Naive thymus-derived CD4-positive, alpha-beta T cell (primary cell): ENCODE measurements at regions of chr2 and their contacts with region 1.

Region 1: DNA sequence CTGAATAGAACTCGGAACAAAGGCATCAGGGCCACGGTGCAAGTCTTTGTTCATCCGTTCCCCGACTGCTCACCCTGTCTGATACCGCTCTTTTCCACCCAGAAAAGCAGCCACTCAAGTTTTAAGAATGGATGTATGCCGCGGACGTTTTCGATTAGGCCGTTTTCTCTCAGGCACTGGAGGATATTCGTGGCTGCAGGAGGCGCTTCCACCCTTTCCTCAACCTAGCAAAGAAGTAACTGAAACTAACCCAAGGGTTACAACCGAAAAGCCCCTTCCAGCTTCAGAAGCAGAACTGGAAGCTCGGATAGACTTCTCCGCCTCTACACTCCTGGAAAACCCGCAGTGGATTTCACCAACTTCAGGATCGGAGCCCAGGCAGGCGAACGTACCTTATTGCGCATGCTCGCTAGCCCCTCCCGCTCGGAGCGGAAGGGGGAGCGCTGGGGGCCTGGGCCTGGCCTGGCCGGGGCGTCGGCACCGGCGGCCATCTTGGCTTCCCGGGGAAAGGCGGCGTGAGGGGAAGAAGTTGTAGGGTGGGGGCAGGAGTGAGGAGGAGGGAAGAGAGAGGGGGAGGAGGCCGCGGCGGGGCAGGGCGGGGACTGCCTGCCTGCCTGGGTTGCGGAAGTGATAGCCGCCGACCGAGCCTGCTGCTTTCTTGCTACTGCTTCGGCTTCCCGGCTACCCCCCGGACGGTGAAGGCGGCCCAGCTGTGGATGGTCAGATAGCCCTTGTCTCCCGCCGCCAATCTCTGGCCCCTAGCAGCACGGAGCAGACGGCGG is at the start of gene ACTR3:
- DNase-seq: peak; percentile 93 to 99 (median 98)
- ATAC-seq: peak; percentile 94
- H3K4me3 ChIP-seq: peak within 1 kb of the TSS; percentile 89
- H3K4me3 Mint-ChIP-seq: peak within 1 kb of the TSS; percentile 88 to 100 (median 98)
- H3K27ac ChIP-seq: peak within 1 kb of the TSS; percentile 98
- H3K27ac Mint-ChIP-seq: peak within 1 kb of the TSS; percentile 90 to 99 (median 98)
- H3K4me1 ChIP-seq: peaks cover 45 to 68% of the 10 kb centered on the region in 2 donors
- H3K4me1 Mint-ChIP-seq: peaks cover 59 to 84% (median 81%) of the 10 kb centered on the region in 7 donors
- H3K27me3 ChIP-seq: no peaks in the 10 kb centered on the region
- H3K27me3 Mint-ChIP-seq: no peaks in the 10 kb centered on the region
- total RNA-seq, gene ACTR3: 172 to 612 (median 213) TPM

Region 2: GRCh38 chr2:112187805-112188596 is 1701.7 kb before region 1 on chr2:
- CTCF ChIA-PET with region 1: no interaction called
- POLR2A ChIA-PET with region 1: no interaction called
- intact Hi-C with region 1: loop called in 1 of 2 experiments (anchors 10 kb)
- DNase-seq: peak in 8 of 9 donors; percentile 69 to 95 (median 88)
- ATAC-seq: peak; percentile 90
- H3K4me3 ChIP-seq: peak overlapping the region; percentile 31
- H3K4me3 Mint-ChIP-seq: peak overlapping the region; percentile 58 to 88 (median 74)
- H3K27ac ChIP-seq: peak overlapping the region; percentile 85
- H3K27ac Mint-ChIP-seq: peak overlapping the region; percentile 92 to 100 (median 99)
- H3K4me1 ChIP-seq: peaks cover 21 to 80% of the 10 kb centered on the region in 2 donors
- H3K4me1 Mint-ChIP-seq: peaks cover 59 to 96% (median 94%) of the 10 kb centered on the region in 7 donors
- H3K27me3 ChIP-seq: no peaks in the 10 kb centered on the region
- H3K27me3 Mint-ChIP-seq: no peaks in the 10 kb centered on the region

Region 3: DNA sequence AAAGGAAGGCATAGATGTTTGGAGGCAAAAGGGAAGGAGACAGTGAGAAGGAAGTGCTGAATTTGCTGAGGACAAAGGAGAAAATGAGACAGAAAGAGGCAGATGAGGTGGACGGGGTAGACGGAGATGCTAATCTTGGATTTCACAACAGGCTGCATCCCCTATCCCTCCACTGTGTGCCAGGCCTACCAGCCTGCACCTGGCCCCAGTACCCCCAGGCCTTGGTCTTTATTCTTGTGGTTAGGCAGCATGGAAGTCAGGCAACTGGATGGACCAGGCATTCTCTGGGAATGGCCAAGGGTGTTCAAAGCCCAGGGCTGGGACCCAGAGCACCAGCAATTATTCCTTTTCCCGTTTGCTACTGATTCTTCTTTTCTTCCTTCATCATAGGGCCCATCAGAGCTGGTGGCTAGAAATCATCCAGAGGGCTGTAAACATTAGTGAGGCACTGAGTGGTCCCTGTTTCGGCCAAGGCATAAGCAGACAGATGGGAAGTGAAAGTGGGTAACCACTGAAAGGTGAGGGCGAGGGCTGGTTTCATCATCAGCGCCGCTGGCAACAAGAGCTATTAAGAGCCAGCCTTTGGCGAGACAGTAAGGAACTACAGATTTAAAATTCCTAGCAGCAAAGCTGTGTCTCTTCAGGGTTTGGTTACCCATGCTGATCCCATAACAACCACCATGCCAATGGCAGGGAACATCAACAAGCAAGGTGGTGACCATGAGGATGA is 1253.3 kb before region 1 on chr2:
- CTCF ChIA-PET with region 1: no interaction called
- POLR2A ChIA-PET with region 1: no interaction called
- intact Hi-C with region 1: no loop called
- DNase-seq: no peak
- ATAC-seq: no peak
- H3K4me3 ChIP-seq: no peak overlapping the region
- H3K4me3 Mint-ChIP-seq: peak overlapping the region in 6 of 10 donors; percentile 1 to 73 (median 35)
- H3K27ac ChIP-seq: no peak overlapping the region
- H3K27ac Mint-ChIP-seq: peak overlapping the region in 6 of 9 donors; percentile 16 to 95 (median 82)
- H3K4me1 ChIP-seq: peaks cover 50 to 59% of the 10 kb centered on the region in 2 donors
- H3K4me1 Mint-ChIP-seq: peaks cover 44 to 81% (median 55%) of the 10 kb centered on the region in 7 donors
- H3K27me3 ChIP-seq: no peaks in the 10 kb centered on the region
- H3K27me3 Mint-ChIP-seq: no peaks in the 10 kb centered on the region

Region 4: DNA sequence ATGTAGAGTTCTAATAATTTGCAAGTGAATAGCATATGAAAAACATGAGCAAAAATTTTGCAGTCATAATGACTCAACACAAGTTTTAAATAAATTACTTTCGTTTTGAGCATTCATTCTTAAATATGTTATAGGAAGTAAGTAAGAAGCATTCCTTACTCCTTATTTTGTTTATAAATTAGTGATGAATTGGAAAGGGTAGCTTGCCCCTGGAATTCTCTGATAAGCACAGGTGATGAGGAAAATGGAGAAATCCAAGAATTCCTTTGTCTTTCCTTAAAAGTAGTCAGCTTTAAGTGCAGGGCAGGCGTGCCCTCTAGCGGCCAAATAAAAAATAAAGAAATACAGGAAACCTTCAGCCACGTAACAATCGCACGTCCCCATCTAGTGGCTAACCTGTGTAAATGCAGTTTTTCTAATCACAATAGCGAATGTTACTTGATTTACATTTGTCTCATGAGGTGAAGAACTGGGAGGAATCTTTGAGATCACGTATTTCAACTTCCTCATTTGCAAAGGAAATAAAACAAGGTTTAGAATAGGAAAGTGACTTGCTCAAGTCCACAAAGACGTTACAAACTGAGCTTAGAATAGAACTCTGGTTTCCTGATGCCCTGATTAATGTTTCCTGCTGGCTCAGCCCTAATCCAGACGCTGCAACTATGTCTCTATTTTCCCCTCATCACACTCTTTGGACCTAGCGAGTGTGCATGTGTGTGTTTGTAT is 499.4 kb before region 1 on chr2:
- CTCF ChIA-PET with region 1: no interaction called
- POLR2A ChIA-PET with region 1: no interaction called
- intact Hi-C with region 1: loop called in 1 of 2 experiments (anchors 5 kb)
- DNase-seq: peak in 8 of 9 donors; percentile 28 to 85 (median 82)
- ATAC-seq: peak; percentile 99
- H3K4me3 ChIP-seq: peak overlapping the region; percentile 73
- H3K4me3 Mint-ChIP-seq: peak overlapping the region; percentile 57 to 89 (median 77)
- H3K27ac ChIP-seq: no peak overlapping the region
- H3K27ac Mint-ChIP-seq: peak overlapping the region; percentile 22 to 84 (median 68)
- H3K4me1 ChIP-seq: no peaks in the 10 kb centered on the region
- H3K4me1 Mint-ChIP-seq: peaks cover 9 to 20% (median 16%) of the 10 kb centered on the region in 7 donors
- H3K27me3 ChIP-seq: no peaks in the 10 kb centered on the region
- H3K27me3 Mint-ChIP-seq: peaks cover 6 to 38% (median 11%) of the 10 kb centered on the region in 5 donors

Region 5: GRCh38 chr2:113756355-113757137 is 133.1 kb before region 1 on chr2 and contains the start of gene SLC35F5:
- CTCF ChIA-PET with region 1: no interaction called
- POLR2A ChIA-PET with region 1: interaction called, 7 read pairs
- intact Hi-C with region 1: loop called (anchors 1 kb)
- DNase-seq: peak; percentile 84 to 99 (median 92)
- ATAC-seq: peak; percentile 97
- H3K4me3 ChIP-seq: peak within 1 kb of the TSS; percentile 79
- H3K4me3 Mint-ChIP-seq: peak within 1 kb of the TSS; percentile 87 to 99 (median 97)
- H3K27ac ChIP-seq: peak within 1 kb of the TSS; percentile 96
- H3K27ac Mint-ChIP-seq: peak within 1 kb of the TSS; percentile 97 to 100 (median 99)
- H3K4me1 ChIP-seq: peaks cover 8 to 11% of the 10 kb centered on the region in 2 donors
- H3K4me1 Mint-ChIP-seq: peaks cover 10 to 38% (median 28%) of the 10 kb centered on the region in 7 donors
- H3K27me3 ChIP-seq: no peaks in the 10 kb centered on the region
- H3K27me3 Mint-ChIP-seq: no peaks in the 10 kb centered on the region
- total RNA-seq, gene SLC35F5: 20.9 to 33.4 (median 26.4) TPM

Region 6: DNA sequence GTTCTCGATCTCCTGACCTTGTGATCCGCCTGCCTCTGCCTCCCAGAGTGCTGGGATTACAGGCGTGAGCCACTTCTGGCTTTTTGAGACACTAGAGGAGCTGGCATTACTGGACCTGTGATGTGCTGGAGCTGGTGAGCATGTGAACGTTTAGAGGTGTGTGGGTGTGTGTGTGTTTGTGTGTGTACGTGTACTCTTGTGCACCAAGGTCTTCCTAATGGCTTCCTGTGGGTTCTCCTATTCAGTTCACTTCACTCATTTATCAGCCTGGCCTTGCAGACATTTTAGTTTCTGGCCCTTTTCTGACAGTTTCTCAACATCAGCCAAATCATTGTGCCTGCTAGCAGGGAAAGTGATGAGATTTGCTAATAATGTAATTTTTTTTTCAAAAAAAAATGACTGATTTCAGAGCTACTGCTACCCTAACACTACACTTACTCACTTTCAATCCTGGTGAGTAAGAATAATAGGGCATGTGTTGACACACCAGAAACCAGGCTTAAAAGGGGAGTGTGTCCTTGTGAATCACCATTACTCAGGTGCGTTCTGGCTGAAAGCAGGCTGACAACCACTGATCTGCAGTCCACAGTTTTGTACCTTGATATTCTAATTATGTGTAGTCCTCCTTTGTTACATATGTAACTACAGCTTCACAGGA is 40.8 kb before region 1 on chr2:
- CTCF ChIA-PET with region 1: no interaction called
- POLR2A ChIA-PET with region 1: no interaction called
- intact Hi-C with region 1: no loop called
- DNase-seq: no peak
- ATAC-seq: no peak
- H3K4me3 ChIP-seq: no peak overlapping the region
- H3K4me3 Mint-ChIP-seq: no peak overlapping the region
- H3K27ac ChIP-seq: no peak overlapping the region
- H3K27ac Mint-ChIP-seq: no peak overlapping the region
- H3K4me1 ChIP-seq: no peaks in the 10 kb centered on the region
- H3K4me1 Mint-ChIP-seq: peaks cover 0 to 6% (median 2%) of the 10 kb centered on the region in 7 donors
- H3K27me3 ChIP-seq: no peaks in the 10 kb centered on the region
- H3K27me3 Mint-ChIP-seq: no peaks in the 10 kb centered on the region

Region 7: DNA sequence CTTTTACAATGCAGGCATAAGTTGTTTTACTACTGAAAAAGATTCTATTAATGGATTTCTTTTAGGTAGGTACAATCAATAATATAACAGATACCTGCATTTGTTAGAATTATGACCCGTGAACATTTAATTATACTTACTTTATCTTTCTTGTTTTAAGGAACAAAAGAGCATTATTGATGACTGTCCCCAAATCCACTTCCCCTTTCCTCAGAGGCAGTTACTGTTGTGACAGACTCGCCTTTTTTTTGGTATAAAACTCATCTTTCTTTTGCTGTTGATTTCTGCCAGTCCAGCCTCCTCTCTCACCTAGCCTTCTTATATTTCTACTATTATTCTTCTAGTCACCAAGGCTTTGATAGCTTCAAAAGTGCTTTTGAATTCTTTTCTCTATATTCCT is 12.3 kb after region 1 on chr2:
- CTCF ChIA-PET with region 1: interaction called, 3 read pairs
- POLR2A ChIA-PET with region 1: interaction called, 4 read pairs
- intact Hi-C with region 1: loop called (anchors 1 kb)
- DNase-seq: no peak
- ATAC-seq: peak; percentile 51
- H3K4me3 ChIP-seq: no peak overlapping the region
- H3K4me3 Mint-ChIP-seq: peak overlapping the region; percentile 5 to 98 (median 71)
- H3K27ac ChIP-seq: no peak overlapping the region
- H3K27ac Mint-ChIP-seq: peak overlapping the region in 8 of 9 donors; percentile 60 to 85 (median 68)
- H3K4me1 ChIP-seq: peaks cover 56 to 67% of the 10 kb centered on the region in 2 donors
- H3K4me1 Mint-ChIP-seq: peaks cover 73 to 100% (median 99%) of the 10 kb centered on the region in 7 donors
- H3K27me3 ChIP-seq: no peaks in the 10 kb centered on the region
- H3K27me3 Mint-ChIP-seq: no peaks in the 10 kb centered on the region

Region 8: GRCh38 chr2:113930448-113930847 is 40.8 kb after region 1 on chr2:
- CTCF ChIA-PET with region 1: no interaction called
- POLR2A ChIA-PET with region 1: interaction called, 3 read pairs
- intact Hi-C with region 1: loop called in 1 of 2 experiments (anchors 2 kb)
- DNase-seq: no peak
- ATAC-seq: no peak
- H3K4me3 ChIP-seq: no peak overlapping the region
- H3K4me3 Mint-ChIP-seq: no peak overlapping the region
- H3K27ac ChIP-seq: peak overlapping the region; percentile 31
- H3K27ac Mint-ChIP-seq: peak overlapping the region in 6 of 9 donors; percentile 20 to 65 (median 58)
- H3K4me1 ChIP-seq: no peaks in the 10 kb centered on the region
- H3K4me1 Mint-ChIP-seq: peaks cover 9 to 54% (median 36%) of the 10 kb centered on the region in 7 donors
- H3K27me3 ChIP-seq: no peaks in the 10 kb centered on the region
- H3K27me3 Mint-ChIP-seq: no peaks in the 10 kb centered on the region